ENCODE measurements at regions of chr11 and their contacts with region 1.

Region 1: GRCh38 chr11:95266751-95267374 is 35.9 kb upstream of the SESN3 start:
- DNase-seq: no peak
- ATAC-seq: no peak
- H3K4me3 ChIP-seq: no peak overlapping the region
- H3K27ac ChIP-seq: no peak overlapping the region
- H3K4me1 ChIP-seq: no peaks in the 10 kb centered on the region
- H3K27me3 ChIP-seq: no peaks in the 10 kb centered on the region
- CTCF ChIP-seq: no peak
- EP300 ChIP-seq: no peak
- POLR2A ChIP-seq: no peak
- RAD21 ChIP-seq: no peak

Region 2: DNA sequence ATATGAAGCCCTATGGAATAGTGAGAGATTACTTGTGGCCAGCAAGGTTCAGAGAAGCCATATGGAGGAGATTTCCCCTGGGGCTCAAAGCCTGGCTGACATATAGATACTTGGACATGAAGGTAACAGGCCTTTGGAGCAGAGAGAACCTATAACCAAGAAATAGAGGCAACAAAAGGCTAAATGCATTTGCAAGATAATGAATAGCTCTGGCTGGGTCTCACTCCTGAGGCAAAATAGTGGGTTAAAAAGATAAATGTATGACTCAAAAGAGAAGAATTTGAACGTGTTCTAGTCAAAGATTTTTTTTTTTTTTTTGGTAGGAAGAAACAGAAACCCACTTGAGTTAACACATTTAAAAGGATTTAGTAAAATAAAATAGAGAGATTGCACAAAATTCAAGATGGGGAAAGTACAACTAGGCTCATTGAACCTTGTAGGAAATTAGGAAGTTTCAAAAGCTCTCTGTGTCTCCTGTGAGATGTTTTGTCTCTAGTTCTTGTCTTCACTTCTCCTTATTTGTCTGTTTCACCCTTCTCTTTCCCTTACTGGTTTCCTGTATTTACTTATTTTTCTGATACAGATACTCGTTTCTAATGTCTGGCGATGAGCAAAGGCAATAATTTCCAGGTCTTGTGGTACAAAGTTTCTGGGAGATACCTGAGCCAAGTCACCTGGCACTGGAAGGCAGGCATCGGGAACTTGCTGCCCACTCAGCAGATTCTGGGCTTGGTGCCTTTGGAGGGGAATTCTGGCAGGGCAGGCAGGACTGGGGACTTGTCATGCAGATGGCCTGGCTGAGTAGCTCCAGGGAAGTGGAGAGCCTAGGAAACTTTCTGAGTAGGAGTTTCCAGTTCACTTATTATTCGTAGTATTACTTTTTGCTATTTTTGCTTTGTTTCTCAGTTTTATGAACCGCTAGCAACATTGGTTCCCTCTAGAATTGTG is 13.3 kb after region 1 on chr11:
- CTCF ChIA-PET with region 1: interaction called, 6 read pairs
- POLR2A ChIA-PET with region 1: no interaction called
- RAD21 ChIA-PET with region 1: no interaction called
- SMC1A ChIA-PET with region 1: interaction called, 12 read pairs
- in situ Hi-C with region 1: no loop called
- intact Hi-C with region 1: no loop called
- DNase-seq: no peak
- ATAC-seq: peak; percentile 68
- H3K4me3 ChIP-seq: no peak overlapping the region
- H3K27ac ChIP-seq: no peak overlapping the region
- H3K4me1 ChIP-seq: peaks cover 6% of the 10 kb centered on the region
- H3K27me3 ChIP-seq: peaks cover 0 to 10% of the 10 kb centered on the region in 2 experiments; a peak in 3 of 4 replicates
- CTCF ChIP-seq: no peak
- EP300 ChIP-seq: no peak
- POLR2A ChIP-seq: no peak
- RAD21 ChIP-seq: no peak